Dorsolateral prefrontal cortex (tissue), 120 donors: ENCODE measurements at regions of chr4 and their contacts with region 1.

Region 1: DNA sequence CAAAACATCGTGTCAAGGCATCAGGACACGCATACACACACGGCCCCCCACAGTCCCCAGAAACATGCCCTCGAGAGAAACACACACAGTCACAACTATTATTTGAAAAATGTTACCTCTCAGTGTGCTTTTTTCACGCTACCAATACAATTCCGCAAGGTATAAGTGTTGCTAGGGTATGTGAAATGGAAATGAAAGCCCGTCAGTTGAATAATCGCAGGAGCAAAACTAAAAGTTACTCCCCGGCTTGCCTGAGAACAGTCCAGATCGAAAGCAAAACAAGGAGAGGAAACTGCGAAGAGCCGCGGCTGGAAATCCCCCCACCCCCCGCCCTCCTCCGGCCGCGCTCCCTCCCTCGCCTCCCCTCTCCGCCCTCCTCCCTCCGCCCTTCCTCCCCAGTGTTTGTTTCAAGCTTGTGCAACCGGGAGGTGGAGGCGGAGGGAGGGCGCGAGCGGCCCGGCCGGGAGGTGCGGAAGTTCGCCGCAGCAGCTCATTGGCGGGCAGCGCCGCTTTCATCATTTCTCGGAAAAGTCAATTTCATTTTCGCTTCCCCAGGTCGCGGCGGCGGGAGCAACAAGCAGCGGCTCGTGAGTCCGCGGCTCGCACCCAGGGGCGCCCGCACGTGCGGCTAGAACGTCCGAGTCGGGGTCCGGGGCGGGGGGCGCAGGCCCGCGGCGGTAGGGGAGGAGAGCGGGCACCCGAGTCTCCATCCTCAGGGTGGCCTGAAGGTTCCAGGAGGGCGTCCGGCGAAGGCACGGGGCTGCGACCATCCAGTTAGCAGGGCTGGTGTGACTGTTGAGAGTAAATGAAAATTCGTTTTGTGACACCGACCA is at the start of gene IRF2:
- DNase-seq: peak; percentile 90 to 96 (median 94)
- H3K4me3 ChIP-seq: peak within 1 kb of the TSS; percentile 62 to 99 (median 89)
- H3K27ac ChIP-seq: peak within 1 kb of the TSS; percentile 77 to 100 (median 98)
- H3K27me3 ChIP-seq: no peaks in the 10 kb centered on the region
- CTCF ChIP-seq: peak in 37 of 56 donors; percentile 8 to 58 (median 27)
- total RNA-seq, gene IRF2: 18.8 to 61.7 (median 33.1) TPM

Region 2: GRCh38 chr4:184263910-184264732 is 210.4 kb before region 1 on chr4:
- intact Hi-C with region 1: loop called (anchors 2 to 5 kb)
- DNase-seq: peak; percentile 87 to 97 (median 94)
- H3K4me3 ChIP-seq: peak overlapping the region in 11 of 59 donors; percentile 6 to 45 (median 19)
- H3K27ac ChIP-seq: peak overlapping the region in 45 of 59 donors; percentile 8 to 86 (median 66)
- H3K27me3 ChIP-seq: no peaks in the 10 kb centered on the region
- CTCF ChIP-seq: peak; percentile 90 to 99 (median 96)

Region 3: DNA sequence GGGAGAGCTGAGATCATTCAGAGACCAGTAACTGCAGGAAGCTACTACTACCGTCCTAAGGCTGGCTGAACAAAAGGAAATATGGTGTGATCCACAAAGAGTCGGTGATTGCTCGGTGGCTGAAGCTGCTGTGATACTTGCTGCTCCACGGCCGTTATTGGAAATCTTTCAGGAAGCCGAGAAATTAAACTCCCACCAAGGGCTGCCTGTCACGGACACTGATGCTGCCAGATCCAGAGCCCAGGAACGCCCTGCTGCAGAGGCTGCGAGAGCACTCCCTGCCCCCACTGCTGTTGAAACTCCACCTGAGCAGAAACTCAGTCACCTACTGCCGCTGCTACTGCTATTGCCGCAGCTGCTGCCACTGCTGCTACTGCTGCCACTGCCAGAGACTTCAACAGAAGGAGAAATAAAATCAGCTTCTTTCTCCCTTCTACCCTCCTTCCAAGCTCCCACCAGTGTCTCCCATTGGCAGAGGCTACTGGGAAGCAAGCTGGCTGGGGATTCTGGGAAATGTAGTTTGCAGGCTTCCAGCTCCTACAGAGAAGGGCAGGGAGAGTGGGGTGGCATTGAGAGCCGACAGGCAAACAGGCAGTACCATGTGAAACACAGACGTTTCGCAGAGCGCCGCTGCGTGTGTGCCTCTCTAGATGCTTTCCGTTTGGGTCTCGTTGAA is 130.8 kb before region 1 on chr4:
- intact Hi-C with region 1: loop called in 1 of 2 experiments (anchors 5 kb)
- DNase-seq: peak; percentile 37 to 89 (median 82)
- H3K4me3 ChIP-seq: peak overlapping the region; percentile 51 to 94 (median 72)
- H3K27ac ChIP-seq: peak overlapping the region in 57 of 59 donors; percentile 5 to 89 (median 75)
- H3K27me3 ChIP-seq: no peaks in the 10 kb centered on the region
- CTCF ChIP-seq: peak in 9 of 56 donors; percentile 13 to 24 (median 18)

Region 4: GRCh38 chr4:184417802-184418511 is 56.5 kb before region 1 on chr4:
- intact Hi-C with region 1: loop called (anchors 2 to 10 kb)
- DNase-seq: peak in 4 of 10 donors; percentile 39 to 57 (median 54)
- H3K4me3 ChIP-seq: peak overlapping the region in 23 of 59 donors; percentile 1 to 53 (median 38)
- H3K27ac ChIP-seq: peak overlapping the region in 51 of 59 donors; percentile 1 to 86 (median 68)
- H3K27me3 ChIP-seq: no peaks in the 10 kb centered on the region
- CTCF ChIP-seq: peak in 23 of 56 donors; percentile 8 to 48 (median 24)

Region 5: GRCh38 chr4:184538023-184538599 is 63.6 kb after region 1 on chr4:
- intact Hi-C with region 1: loop called (anchors 1 kb)
- DNase-seq: peak; percentile 61 to 93 (median 87)
- H3K4me3 ChIP-seq: peak overlapping the region; percentile 51 to 97 (median 82)
- H3K27ac ChIP-seq: peak overlapping the region; percentile 76 to 99 (median 96)
- H3K27me3 ChIP-seq: no peaks in the 10 kb centered on the region
- CTCF ChIP-seq: peak; percentile 23 to 89 (median 80)